Uterus (tissue), 4 donors: ENCODE measurements at regions of chr3 and their contacts with region 1.

Region 1: GRCh38 chr3:194682694-194683310 is 2.9 kb upstream of the FAM43A start:
- DNase-seq: peak; percentile 76
- H3K4me3 ChIP-seq: no peak overlapping the region
- H3K27ac ChIP-seq: peak overlapping the region in 1 of 2 donors; percentile 49
- H3K4me1 ChIP-seq: peaks cover 0 to 5% of the 10 kb centered on the region in 2 donors
- H3K27me3 ChIP-seq: no peaks in the 10 kb centered on the region
- CTCF ChIP-seq: peak; percentile 84 to 94 (median 90)
- POLR2A ChIP-seq: no peak

Region 2: GRCh38 chr3:194967151-194968117 is 284.6 kb after region 1 on chr3:
- intact Hi-C with region 1: no loop called
- DNase-seq: no peak
- H3K4me3 ChIP-seq: no peak overlapping the region
- H3K27ac ChIP-seq: no peak overlapping the region
- H3K4me1 ChIP-seq: no peaks in the 10 kb centered on the region
- H3K27me3 ChIP-seq: no peaks in the 10 kb centered on the region
- CTCF ChIP-seq: no peak
- POLR2A ChIP-seq: no peak

Region 3: GRCh38 chr3:195106418-195106906 is 423.7 kb after region 1 on chr3:
- intact Hi-C with region 1: loop called (anchors 5 kb)
- DNase-seq: peak; percentile 72 to 77
- H3K4me3 ChIP-seq: peak overlapping the region in 1 of 2 donors; percentile 3
- H3K27ac ChIP-seq: peak overlapping the region in 1 of 2 donors; percentile 5
- H3K4me1 ChIP-seq: peaks cover 0 to 9% of the 10 kb centered on the region in 2 donors
- H3K27me3 ChIP-seq: no peaks in the 10 kb centered on the region
- CTCF ChIP-seq: peak; percentile 98 to 100 (median 100)
- POLR2A ChIP-seq: peak in 1 of 2 donors; percentile 44

Region 4: GRCh38 chr3:195259475-195260279 is 576.9 kb after region 1 on chr3:
- intact Hi-C with region 1: loop called (anchors 5 kb)
- DNase-seq: peak; percentile 95 to 97
- H3K4me3 ChIP-seq: peak overlapping the region; percentile 59 to 70
- H3K27ac ChIP-seq: peak overlapping the region; percentile 87 to 98
- H3K4me1 ChIP-seq: peaks cover 7 to 22% of the 10 kb centered on the region in 2 donors
- H3K27me3 ChIP-seq: no peaks in the 10 kb centered on the region
- CTCF ChIP-seq: peak; percentile 11 to 100 (median 92)
- POLR2A ChIP-seq: peak; percentile 73 to 80